MCF 10A (cell line): ENCODE measurements at regions of chr19 and their contacts with region 1.

Region 1: DNA sequence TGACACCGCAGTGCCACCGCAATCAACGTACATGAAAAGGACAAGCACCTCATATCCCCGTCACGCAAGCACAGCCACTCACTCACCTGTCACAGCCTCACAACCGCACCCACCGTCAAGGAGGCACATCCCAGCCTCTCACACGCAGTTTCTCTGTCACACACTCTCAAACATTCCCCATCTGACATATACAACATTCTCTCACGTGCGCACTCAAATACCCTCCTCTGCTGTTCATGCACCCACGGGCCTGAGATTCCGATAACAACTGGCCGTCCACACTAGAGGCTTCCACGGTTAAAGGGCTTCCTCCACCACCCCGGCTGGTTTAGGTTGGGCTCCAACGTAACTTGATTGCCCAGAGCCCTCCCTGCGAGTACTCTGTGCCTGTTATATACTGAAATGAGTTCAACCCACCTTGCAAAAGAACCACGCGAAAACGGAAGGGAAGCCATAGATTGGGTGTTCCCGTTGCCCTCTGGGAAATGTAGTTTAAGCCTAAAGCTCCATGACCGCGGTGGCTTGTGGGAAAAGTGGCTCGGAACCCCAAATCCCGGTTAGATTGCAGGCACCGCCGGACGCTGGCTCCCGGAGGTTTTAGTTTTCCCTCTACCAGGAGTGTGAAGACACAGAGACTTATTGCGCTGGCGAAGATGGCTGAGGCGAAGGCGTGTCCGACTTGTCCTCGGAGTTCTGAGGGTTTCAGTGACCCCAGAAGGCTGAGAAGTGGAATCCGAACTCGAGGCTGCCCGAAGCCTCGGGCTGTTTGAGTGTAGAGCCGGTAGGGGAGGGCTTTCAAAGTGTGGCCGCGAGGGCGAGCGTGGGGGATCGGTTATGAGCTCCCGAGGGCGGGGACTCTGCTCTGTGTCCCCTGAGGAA is at the start of gene ZNF573:
- DNase-seq: peak; percentile 95
- H3K4me3 Mint-ChIP-seq: peak within 1 kb of the TSS; percentile 88
- H3K27ac Mint-ChIP-seq: peak within 1 kb of the TSS; percentile 95
- H3K4me1 Mint-ChIP-seq: peaks cover 5% of the 10 kb centered on the region
- H3K27me3 Mint-ChIP-seq: no peaks in the 10 kb centered on the region
- CTCF ChIP-seq: no peak
- total RNA-seq, gene ZNF573: 6.1 and 11.9 TPM in 2 replicates

Region 2: GRCh38 chr19:36132489-36132891 is 1646.9 kb before region 1 on chr19:
- CTCF ChIA-PET with region 1: no interaction called
- POLR2A ChIA-PET with region 1: no interaction called
- intact Hi-C with region 1: loop called (anchors 10 kb)
- DNase-seq: peak; percentile 100
- H3K4me3 Mint-ChIP-seq: no peak overlapping the region
- H3K27ac Mint-ChIP-seq: peak overlapping the region; percentile 71
- H3K4me1 Mint-ChIP-seq: peaks cover 34% of the 10 kb centered on the region
- H3K27me3 Mint-ChIP-seq: no peaks in the 10 kb centered on the region
- CTCF ChIP-seq: no peak

Region 3: GRCh38 chr19:37370880-37371661 is 408.3 kb before region 1 on chr19 and contains the start of gene ZNF527:
- CTCF ChIA-PET with region 1: no interaction called
- POLR2A ChIA-PET with region 1: interaction called, 16 read pairs
- intact Hi-C with region 1: no loop called
- DNase-seq: peak; percentile 95
- H3K4me3 Mint-ChIP-seq: peak within 1 kb of the TSS; percentile 84
- H3K27ac Mint-ChIP-seq: peak within 1 kb of the TSS; percentile 88
- H3K4me1 Mint-ChIP-seq: peaks cover 16% of the 10 kb centered on the region
- H3K27me3 Mint-ChIP-seq: no peaks in the 10 kb centered on the region
- CTCF ChIP-seq: no peak
- total RNA-seq, gene ZNF527: 4.3 and 5.0 TPM in 2 replicates

Region 4: DNA sequence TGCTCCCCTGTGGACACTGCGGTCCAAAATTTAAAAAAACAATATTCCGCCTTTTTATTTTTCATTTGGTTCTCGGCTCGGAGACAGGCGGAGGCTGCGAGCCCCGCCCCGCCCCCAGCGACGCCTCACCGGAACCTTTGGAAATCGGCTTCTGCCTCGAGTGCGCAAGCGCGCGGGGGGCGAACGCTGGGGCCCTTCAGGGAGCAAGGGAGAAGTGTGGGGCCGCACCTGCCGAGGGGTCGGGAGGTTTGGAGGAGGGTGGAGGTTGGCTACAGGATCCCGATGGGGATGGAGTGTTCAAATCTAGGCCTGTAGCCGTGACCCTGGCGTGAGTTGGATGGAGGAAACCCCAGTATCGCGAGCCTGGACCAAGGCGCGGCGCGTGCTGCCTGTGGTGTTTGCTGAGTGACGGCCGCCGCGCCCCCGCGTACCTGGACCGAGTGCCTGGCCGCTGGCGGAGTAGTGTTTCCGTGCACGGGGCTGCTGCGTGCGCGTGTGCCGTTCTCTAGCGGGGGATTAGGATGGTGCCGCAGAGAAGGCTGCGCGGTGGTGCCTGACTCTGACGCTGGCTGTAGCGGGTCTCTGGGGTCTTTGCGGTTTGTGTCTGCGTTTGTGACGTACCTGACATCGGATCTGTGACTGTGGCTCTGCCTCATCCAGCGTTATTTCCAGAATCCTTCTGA is 123.5 kb before region 1 on chr19:
- CTCF ChIA-PET with region 1: no interaction called
- POLR2A ChIA-PET with region 1: interaction called, 22 read pairs
- intact Hi-C with region 1: no loop called
- DNase-seq: peak; percentile 87
- H3K4me3 Mint-ChIP-seq: peak overlapping the region; percentile 89
- H3K27ac Mint-ChIP-seq: peak overlapping the region; percentile 91
- H3K4me1 Mint-ChIP-seq: peaks cover 9% of the 10 kb centered on the region
- H3K27me3 Mint-ChIP-seq: no peaks in the 10 kb centered on the region
- CTCF ChIP-seq: no peak

Region 5: GRCh38 chr19:37699127-37699526 is 80.2 kb before region 1 on chr19:
- CTCF ChIA-PET with region 1: no interaction called
- POLR2A ChIA-PET with region 1: no interaction called
- intact Hi-C with region 1: no loop called
- DNase-seq: no peak
- H3K4me3 Mint-ChIP-seq: no peak overlapping the region
- H3K27ac Mint-ChIP-seq: no peak overlapping the region
- H3K4me1 Mint-ChIP-seq: no peaks in the 10 kb centered on the region
- H3K27me3 Mint-ChIP-seq: no peaks in the 10 kb centered on the region
- CTCF ChIP-seq: no peak

Region 6: GRCh38 chr19:37719111-37719926 is 60.0 kb before region 1 on chr19 and contains the start of gene ZNF607:
- CTCF ChIA-PET with region 1: no interaction called
- POLR2A ChIA-PET with region 1: interaction called, 29 read pairs
- intact Hi-C with region 1: loop called (anchors 1 kb)
- DNase-seq: peak; percentile 94
- H3K4me3 Mint-ChIP-seq: peak within 1 kb of the TSS; percentile 96
- H3K27ac Mint-ChIP-seq: peak within 1 kb of the TSS; percentile 85
- H3K4me1 Mint-ChIP-seq: peaks cover 9% of the 10 kb centered on the region
- H3K27me3 Mint-ChIP-seq: no peaks in the 10 kb centered on the region
- CTCF ChIP-seq: peak; percentile 32
- total RNA-seq, gene ZNF607: 3.0 and 3.4 TPM in 2 replicates

Region 7: GRCh38 chr19:37763488-37763887 is 15.9 kb before region 1 on chr19:
- CTCF ChIA-PET with region 1: no interaction called
- POLR2A ChIA-PET with region 1: interaction called, 20 read pairs
- intact Hi-C with region 1: no loop called
- DNase-seq: peak; percentile 48
- H3K4me3 Mint-ChIP-seq: no peak overlapping the region
- H3K27ac Mint-ChIP-seq: no peak overlapping the region
- H3K4me1 Mint-ChIP-seq: no peaks in the 10 kb centered on the region
- H3K27me3 Mint-ChIP-seq: no peaks in the 10 kb centered on the region
- CTCF ChIP-seq: no peak

Region 8: DNA sequence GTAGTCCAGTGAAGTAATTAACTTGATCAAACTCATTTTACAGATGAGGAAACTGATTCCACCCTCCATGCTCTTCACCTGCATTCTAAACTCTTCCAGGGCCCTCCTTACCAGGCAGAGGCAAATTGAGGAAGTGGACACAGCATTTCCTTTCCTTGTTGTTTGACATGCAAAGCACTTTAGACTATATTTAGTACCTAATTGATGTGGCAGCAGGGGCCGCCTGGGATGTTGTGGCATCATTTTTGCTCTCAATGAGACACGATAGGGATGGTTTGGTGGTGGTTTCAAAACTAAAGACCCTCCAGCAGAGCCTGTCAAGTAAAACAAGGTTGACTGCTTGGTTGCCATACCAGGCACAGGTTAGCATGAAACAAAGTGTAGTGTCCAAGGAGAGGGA is 135.5 kb after region 1 on chr19:
- CTCF ChIA-PET with region 1: no interaction called
- POLR2A ChIA-PET with region 1: no interaction called
- intact Hi-C with region 1: no loop called
- DNase-seq: no peak
- H3K4me3 Mint-ChIP-seq: no peak overlapping the region
- H3K27ac Mint-ChIP-seq: no peak overlapping the region
- H3K4me1 Mint-ChIP-seq: no peaks in the 10 kb centered on the region
- H3K27me3 Mint-ChIP-seq: no peaks in the 10 kb centered on the region
- CTCF ChIP-seq: no peak